Heart right ventricle (tissue), 16 donors: ENCODE measurements at regions of chr4 and their contacts with region 1.

Region 1: DNA sequence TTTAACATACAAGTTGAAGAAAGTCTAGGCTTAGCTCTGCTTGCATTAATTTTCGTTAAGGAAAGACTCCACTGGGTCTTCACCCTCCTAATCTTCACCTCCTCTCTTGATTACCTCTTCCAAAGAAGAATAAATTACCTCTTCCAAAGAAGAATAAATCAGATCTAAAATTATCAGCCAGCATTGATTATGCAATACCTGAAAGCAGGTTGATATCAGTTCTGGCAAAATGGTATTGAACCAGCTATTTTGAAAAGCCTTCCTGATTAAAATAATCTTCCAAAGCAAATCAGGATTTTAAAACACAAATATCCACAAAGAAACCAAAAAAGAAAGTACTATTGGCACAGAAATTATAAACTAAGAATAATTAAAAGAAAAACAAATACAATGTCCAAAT is 36.9 kb downstream of the CDKL2 start:
- DNase-seq: no peak
- ATAC-seq: no peak
- H3K4me3 ChIP-seq: no peak overlapping the region
- H3K27ac ChIP-seq: no peak overlapping the region
- H3K4me1 ChIP-seq: no peaks in the 10 kb centered on the region
- H3K27me3 ChIP-seq: no peaks in the 10 kb centered on the region
- CTCF ChIP-seq: no peak

Region 2: DNA sequence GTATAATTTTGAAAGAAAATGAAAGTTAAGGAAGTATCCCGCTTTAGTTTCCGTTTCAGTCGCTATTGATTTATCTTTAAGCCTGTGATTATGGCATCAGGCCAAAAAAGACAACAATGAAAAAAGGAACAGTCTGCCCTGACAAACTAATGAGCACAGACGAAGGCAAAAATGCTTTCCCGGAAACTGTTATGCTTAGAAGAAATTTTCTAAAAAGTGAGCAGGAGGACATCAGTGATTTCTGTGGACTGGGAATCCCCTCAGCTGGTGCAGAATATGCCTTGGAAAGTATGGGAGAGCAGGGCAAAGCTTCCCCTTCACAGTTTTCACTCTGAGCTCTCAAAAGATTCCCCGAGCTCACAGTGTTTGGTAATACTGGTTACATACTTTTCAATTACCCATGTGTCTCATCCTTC is 435.0 kb after region 1 on chr4:
- intact Hi-C with region 1: loop called in 1 of 10 experiments (anchors 5 kb)
- DNase-seq: no peak
- ATAC-seq: peak in 3 of 8 donors; percentile 19 to 48 (median 47)
- H3K4me3 ChIP-seq: peak overlapping the region in 8 of 10 donors; percentile 4 to 44 (median 29)
- H3K27ac ChIP-seq: peak overlapping the region in 4 of 10 donors; percentile 14 to 62 (median 22)
- H3K4me1 ChIP-seq: peaks cover 0 to 30% (median 0%) of the 10 kb centered on the region in 9 donors
- H3K27me3 ChIP-seq: no peaks in the 10 kb centered on the region
- CTCF ChIP-seq: no peak